ENCODE measurements at regions of chr6 and their contacts with region 1.

Region 1: DNA sequence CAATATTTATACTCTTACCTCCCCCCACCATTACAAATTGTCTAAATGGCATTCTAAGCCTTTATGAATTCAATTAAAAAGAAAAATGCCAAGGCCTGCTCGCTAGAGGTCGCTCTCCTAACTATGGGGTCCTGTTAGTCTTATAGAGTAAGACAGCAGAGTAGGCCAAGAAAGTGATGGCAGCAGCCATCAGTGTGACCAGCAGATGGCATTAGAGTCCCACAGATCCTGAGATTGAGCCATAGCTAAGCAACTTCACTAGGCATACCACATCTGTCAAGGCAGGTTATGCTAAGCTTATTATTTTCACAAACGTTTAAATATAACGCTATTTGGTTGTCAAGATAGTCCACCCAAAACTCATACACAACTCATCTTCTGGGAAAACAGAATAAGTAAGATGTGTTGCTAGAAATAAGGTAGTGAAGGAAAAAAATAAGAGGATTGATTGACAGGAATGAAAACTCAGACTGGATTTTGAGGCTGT is 57.6 kb upstream of the SCAF8 start:
- DNase-seq: peak; percentile 94
- H3K4me3 ChIP-seq: no peak overlapping the region
- H3K27ac ChIP-seq: no peak overlapping the region
- H3K4me1 ChIP-seq: no peaks in the 10 kb centered on the region
- CTCF ChIP-seq: peak; percentile 100

Region 2: GRCh38 chr6:154733012-154733625 is 57.5 kb after region 1 on chr6 and contains the start of gene SCAF8:
- CTCF ChIA-PET with region 1: no interaction called
- POLR2A ChIA-PET with region 1: no interaction called
- intact Hi-C with region 1: loop called (anchors 1 kb)
- DNase-seq: peak; percentile 90
- H3K4me3 ChIP-seq: peak within 1 kb of the TSS; percentile 98
- H3K27ac ChIP-seq: peak within 1 kb of the TSS; percentile 77
- H3K4me1 ChIP-seq: peaks cover 39% of the 10 kb centered on the region
- CTCF ChIP-seq: peak; percentile 77
- total RNA-seq, gene SCAF8: 23.9 and 25.8 TPM in 2 replicates

Region 3: GRCh38 chr6:154868143-154868594 is 192.5 kb after region 1 on chr6:
- CTCF ChIA-PET with region 1: no interaction called
- POLR2A ChIA-PET with region 1: no interaction called
- intact Hi-C with region 1: loop called (anchors 2 kb)
- DNase-seq: peak; percentile 64
- H3K4me3 ChIP-seq: no peak overlapping the region
- H3K27ac ChIP-seq: no peak overlapping the region
- H3K4me1 ChIP-seq: no peaks in the 10 kb centered on the region
- CTCF ChIP-seq: peak; percentile 95

Region 4: GRCh38 chr6:155174576-155175211 is 499.0 kb after region 1 on chr6:
- CTCF ChIA-PET with region 1: interaction called, 4 read pairs
- POLR2A ChIA-PET with region 1: no interaction called
- intact Hi-C with region 1: loop called (anchors 1 kb)
- DNase-seq: peak; percentile 92
- H3K4me3 ChIP-seq: no peak overlapping the region
- H3K27ac ChIP-seq: peak overlapping the region; percentile 84
- H3K4me1 ChIP-seq: peaks cover 55% of the 10 kb centered on the region
- CTCF ChIP-seq: peak; percentile 89

Measured in OCI-LY7 (cell line).